Left ventricle myocardium superior (tissue), 1 donor: ENCODE measurements at regions of chr1 and their contacts with region 1.

Region 1: DNA sequence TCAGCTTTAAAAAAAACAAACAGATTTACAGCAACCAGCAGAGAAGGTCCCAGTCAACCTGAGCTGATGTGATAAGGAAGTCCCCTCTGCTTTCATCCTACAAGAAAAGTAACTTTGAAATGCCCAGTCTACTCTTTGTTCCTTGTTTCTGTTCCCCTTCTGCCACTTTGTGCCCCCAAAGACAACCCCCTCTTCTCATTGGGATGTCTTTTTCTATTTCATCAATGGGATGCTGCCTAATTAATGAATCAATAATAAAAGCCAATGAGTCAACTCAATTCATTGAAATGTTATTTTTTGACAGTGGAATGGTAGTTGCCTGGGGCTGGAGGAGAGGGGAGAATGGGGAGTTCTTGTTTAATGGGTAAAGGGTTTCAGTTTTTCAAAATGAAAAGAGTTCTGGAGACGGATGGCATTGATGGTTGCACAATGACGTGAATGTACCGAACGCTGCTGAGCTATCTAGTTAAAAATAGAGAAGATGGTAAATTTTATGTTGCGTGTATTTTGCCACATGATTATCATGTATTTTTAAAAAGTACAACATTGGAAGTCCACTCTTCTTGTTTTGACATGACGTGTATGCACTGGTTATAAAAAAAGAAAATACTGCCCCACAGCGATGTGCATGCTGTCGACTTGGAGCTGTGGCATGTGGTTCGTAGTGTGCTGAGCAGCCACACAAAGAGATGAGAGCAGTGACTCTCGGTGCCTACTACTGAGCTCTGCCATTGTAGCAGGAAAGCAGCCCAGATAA is 22.4 kb upstream of the PADI2 start:
- DNase-seq: no peak
- ATAC-seq: no peak

Region 2: GRCh38 chr1:17289721-17290120 is 148.1 kb after region 1 on chr1:
- intact Hi-C with region 1: no loop called
- DNase-seq: no peak
- ATAC-seq: no peak

Region 3: GRCh38 chr1:18505666-18506065 is 1364.0 kb after region 1 on chr1:
- intact Hi-C with region 1: loop called (anchors 10 kb)
- DNase-seq: no peak
- ATAC-seq: no peak